ENCODE measurements at regions of chr5 and their contacts with region 1.

Region 1: GRCh38 chr5:83564069-83564749 is 92.7 kb downstream of the VCAN start:
- DNase-seq: no peak
- H3K4me3 ChIP-seq: no peak overlapping the region
- H3K27ac ChIP-seq: no peak overlapping the region
- H3K4me1 ChIP-seq: no peaks in the 10 kb centered on the region
- H3K27me3 ChIP-seq: peaks cover 10% of the 10 kb centered on the region
- CTCF ChIP-seq: peak; percentile 60 to 68 (median 64)
- EP300 ChIP-seq: no peak
- POLR2A ChIP-seq: no peak

Region 2: GRCh38 chr5:82351754-82352145 is 1212.5 kb before region 1 on chr5:
- in situ Hi-C with region 1: loop called (anchors 10 to 25 kb)
- intact Hi-C with region 1: loop called (anchors 5 kb)
- DNase-seq: no peak
- H3K4me3 ChIP-seq: no peak overlapping the region
- H3K27ac ChIP-seq: peak overlapping the region in 1 of 4 donors; percentile 10
- H3K4me1 ChIP-seq: no peaks in the 10 kb centered on the region
- H3K27me3 ChIP-seq: no peaks in the 10 kb centered on the region
- CTCF ChIP-seq: peak; percentile 70 to 85 (median 77)
- EP300 ChIP-seq: no peak
- POLR2A ChIP-seq: no peak

Region 3: DNA sequence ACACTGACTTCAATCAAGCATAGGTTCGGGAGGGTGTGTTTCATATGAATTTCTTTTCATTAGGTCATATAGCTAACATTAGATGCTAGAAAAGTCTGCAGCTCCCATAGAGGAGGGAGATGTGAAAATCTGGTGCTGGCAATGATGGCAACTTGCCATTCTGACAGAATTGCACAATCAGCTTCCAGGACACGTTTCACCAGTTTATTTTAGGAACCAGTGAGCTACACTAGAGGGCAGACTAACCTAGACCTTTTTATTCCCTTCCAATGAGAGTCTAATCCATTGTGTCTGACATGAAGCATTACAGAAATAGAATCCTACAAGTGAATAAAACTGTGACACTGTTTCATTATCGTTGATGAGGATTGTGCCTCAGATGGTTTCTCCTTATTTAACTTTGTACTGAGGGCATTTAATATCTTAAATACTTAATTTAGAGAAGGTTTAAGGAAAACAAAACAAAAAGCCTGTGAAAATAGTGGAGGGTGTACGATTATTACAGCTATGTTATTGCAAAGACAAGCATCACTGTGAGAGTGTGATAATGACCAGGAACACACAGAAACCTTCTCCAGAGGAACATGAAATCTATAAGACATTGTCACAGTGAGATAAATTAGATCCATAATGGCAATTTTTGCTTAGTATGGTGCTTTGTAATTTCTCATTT is 922.7 kb before region 1 on chr5:
- in situ Hi-C with region 1: loop called in 3 of 4 experiments (anchors 10 to 25 kb)
- intact Hi-C with region 1: no loop called
- DNase-seq: peak; percentile 74
- H3K4me3 ChIP-seq: no peak overlapping the region
- H3K27ac ChIP-seq: no peak overlapping the region
- H3K4me1 ChIP-seq: peaks cover 3 to 18% (median 8%) of the 10 kb centered on the region in 4 donors
- H3K27me3 ChIP-seq: no peaks in the 10 kb centered on the region
- CTCF ChIP-seq: peak; percentile 57 to 82 (median 66)
- EP300 ChIP-seq: no peak
- POLR2A ChIP-seq: no peak

Region 4: GRCh38 chr5:83107692-83108420 is 456.4 kb before region 1 on chr5:
- in situ Hi-C with region 1: no loop called
- intact Hi-C with region 1: no loop called
- DNase-seq: no peak
- H3K4me3 ChIP-seq: no peak overlapping the region
- H3K27ac ChIP-seq: no peak overlapping the region
- H3K4me1 ChIP-seq: no peaks in the 10 kb centered on the region
- H3K27me3 ChIP-seq: no peaks in the 10 kb centered on the region
- CTCF ChIP-seq: no peak
- EP300 ChIP-seq: no peak
- POLR2A ChIP-seq: no peak

Region 5: DNA sequence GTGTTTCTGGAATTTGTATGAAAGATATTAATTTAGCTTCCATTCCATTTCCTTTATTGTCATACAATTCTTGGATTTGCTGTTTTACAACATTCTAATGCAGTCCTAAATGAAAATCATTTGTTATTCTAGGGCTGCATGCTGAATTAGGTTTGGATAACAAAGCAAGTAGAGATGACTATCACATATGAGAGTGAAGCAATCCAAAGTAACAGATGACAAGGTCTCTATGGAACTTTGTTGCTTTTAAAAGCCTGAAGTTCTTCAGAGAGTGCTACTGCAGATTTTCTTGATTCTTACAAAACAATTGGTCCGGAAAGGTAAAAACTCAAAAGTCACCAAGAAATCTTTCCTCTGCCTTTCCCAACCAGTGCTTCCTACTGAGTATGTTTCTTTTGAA is 149.6 kb before region 1 on chr5:
- in situ Hi-C with region 1: no loop called
- intact Hi-C with region 1: no loop called
- DNase-seq: no peak
- H3K4me3 ChIP-seq: no peak overlapping the region
- H3K27ac ChIP-seq: no peak overlapping the region
- H3K4me1 ChIP-seq: no peaks in the 10 kb centered on the region
- H3K27me3 ChIP-seq: no peaks in the 10 kb centered on the region
- CTCF ChIP-seq: no peak
- EP300 ChIP-seq: no peak
- POLR2A ChIP-seq: no peak

Region 6: GRCh38 chr5:83590966-83591365 is 26.8 kb after region 1 on chr5:
- in situ Hi-C with region 1: no loop called
- intact Hi-C with region 1: loop called (anchors 1 kb)
- DNase-seq: no peak
- H3K4me3 ChIP-seq: no peak overlapping the region
- H3K27ac ChIP-seq: no peak overlapping the region
- H3K4me1 ChIP-seq: no peaks in the 10 kb centered on the region
- H3K27me3 ChIP-seq: no peaks in the 10 kb centered on the region
- CTCF ChIP-seq: no peak
- EP300 ChIP-seq: no peak
- POLR2A ChIP-seq: no peak

Region 7: DNA sequence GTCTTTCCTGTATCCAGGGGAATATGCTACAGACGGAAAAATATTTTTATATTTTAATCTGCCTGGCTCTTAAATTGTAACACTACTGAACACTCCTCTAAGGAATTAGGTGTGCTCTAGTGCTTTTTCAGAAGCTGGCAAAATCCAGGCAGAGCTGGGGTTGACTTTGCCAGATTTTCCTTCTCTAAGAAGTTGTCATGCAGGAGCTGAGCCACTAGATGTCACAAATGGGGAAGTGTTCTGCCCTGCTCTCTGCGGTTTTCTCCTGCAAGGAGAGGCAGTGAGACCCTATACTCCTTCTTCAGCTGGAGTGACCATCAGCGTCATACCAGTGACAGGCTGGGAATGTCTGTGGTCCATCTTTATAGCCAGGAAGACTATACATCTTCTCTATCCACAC is 43.9 kb after region 1 on chr5:
- in situ Hi-C with region 1: no loop called
- intact Hi-C with region 1: no loop called
- DNase-seq: peak; percentile 7
- H3K4me3 ChIP-seq: no peak overlapping the region
- H3K27ac ChIP-seq: no peak overlapping the region
- H3K4me1 ChIP-seq: no peaks in the 10 kb centered on the region
- H3K27me3 ChIP-seq: no peaks in the 10 kb centered on the region
- CTCF ChIP-seq: peak in 2 of 5 experiments; percentile 29 to 30
- EP300 ChIP-seq: no peak
- POLR2A ChIP-seq: no peak

Region 8: GRCh38 chr5:84017523-84018230 is 453.5 kb after region 1 on chr5:
- in situ Hi-C with region 1: no loop called
- intact Hi-C with region 1: no loop called
- DNase-seq: no peak
- H3K4me3 ChIP-seq: no peak overlapping the region
- H3K27ac ChIP-seq: peak overlapping the region in 3 of 4 donors; percentile 17 to 52 (median 22)
- H3K4me1 ChIP-seq: no peaks in the 10 kb centered on the region
- H3K27me3 ChIP-seq: no peaks in the 10 kb centered on the region
- CTCF ChIP-seq: no peak
- EP300 ChIP-seq: no peak
- POLR2A ChIP-seq: no peak

Measured in transverse colon (tissue), 4 donors.